Activated CD4-positive, alpha-beta memory T cell treated with anti-CD3 and anti-CD28 coated beads for 36 hours (primary cell): ENCODE measurements at regions of chr15 and their contacts with region 1.

Region 1: GRCh38 chr15:55526559-55527036 is 18.6 kb upstream of the DNAAF4 start:
- DNase-seq: peak; percentile 20
- H3K4me3 Mint-ChIP-seq: no peak overlapping the region
- H3K27ac Mint-ChIP-seq: no peak overlapping the region
- H3K4me1 Mint-ChIP-seq: peaks cover 4% of the 10 kb centered on the region
- H3K27me3 Mint-ChIP-seq: peaks cover 19% of the 10 kb centered on the region

Region 2: GRCh38 chr15:55637086-55637485 is 110.5 kb after region 1 on chr15:
- CTCF ChIA-PET with region 1: interaction called, 12 read pairs
- POLR2A ChIA-PET with region 1: no interaction called
- intact Hi-C with region 1: loop called (anchors 2 kb)
- DNase-seq: no peak
- H3K4me3 Mint-ChIP-seq: no peak overlapping the region
- H3K27ac Mint-ChIP-seq: no peak overlapping the region
- H3K4me1 Mint-ChIP-seq: no peaks in the 10 kb centered on the region
- H3K27me3 Mint-ChIP-seq: no peaks in the 10 kb centered on the region

Region 3: GRCh38 chr15:55858661-55859060 is 332.1 kb after region 1 on chr15:
- CTCF ChIA-PET with region 1: no interaction called
- POLR2A ChIA-PET with region 1: no interaction called
- intact Hi-C with region 1: no loop called
- DNase-seq: no peak
- H3K4me3 Mint-ChIP-seq: no peak overlapping the region
- H3K27ac Mint-ChIP-seq: no peak overlapping the region
- H3K4me1 Mint-ChIP-seq: no peaks in the 10 kb centered on the region
- H3K27me3 Mint-ChIP-seq: no peaks in the 10 kb centered on the region